IMR-90 (cell line): ENCODE measurements at regions of chr15 and their contacts with region 1.

Region 1: DNA sequence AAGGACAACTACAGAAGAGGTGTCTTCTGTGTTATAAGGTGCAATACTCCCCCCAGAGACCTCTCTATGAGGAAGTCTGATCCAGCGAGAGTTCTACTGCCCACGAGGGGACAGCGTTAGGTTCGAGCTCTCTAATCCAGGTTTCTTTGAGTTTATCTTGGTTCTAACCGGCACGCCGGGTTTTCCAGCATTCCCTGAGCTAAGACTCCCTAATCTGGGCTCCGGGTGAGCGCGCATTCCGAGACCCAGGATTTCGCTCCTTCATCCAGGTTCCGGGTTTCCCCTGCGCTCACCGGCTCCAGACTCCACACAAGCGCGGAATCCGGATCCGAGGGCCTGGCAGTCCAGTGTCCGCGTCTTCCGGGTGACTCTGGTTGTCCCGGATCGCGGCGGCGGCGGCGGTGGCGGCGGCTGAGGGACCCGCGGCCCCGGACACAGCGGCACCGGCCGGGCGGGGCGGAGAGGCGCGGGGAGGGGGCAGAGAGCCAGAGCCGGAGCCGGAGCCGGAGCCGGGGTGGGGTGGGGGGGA is at the start of gene ZNF609:
- DNase-seq: peak; percentile 94
- ATAC-seq: peak; percentile 86
- H3K4me3 ChIP-seq: peak within 1 kb of the TSS; percentile 70
- H3K27ac ChIP-seq: peak within 1 kb of the TSS; percentile 81
- H3K4me1 ChIP-seq: peaks cover 14% of the 10 kb centered on the region
- H3K27me3 ChIP-seq: no peaks in the 10 kb centered on the region
- CTCF ChIP-seq: no peak
- POLR2A ChIP-seq: peak; percentile 34; the same call in 1 of the 2 replicates
- RAD21 ChIP-seq: peak; percentile 40; the same call in 1 of the 2 replicates
- total RNA-seq, gene ZNF609: 10.4 and 12.2 TPM in 2 replicates

Region 2: GRCh38 chr15:64284042-64284441 is 176.2 kb before region 1 on chr15:
- CTCF ChIA-PET with region 1: no interaction called
- POLR2A ChIA-PET with region 1: no interaction called
- dilution Hi-C with region 1: no loop called
- in situ Hi-C with region 1: no loop called
- intact Hi-C with region 1: no loop called
- DNase-seq: peak; percentile 68
- ATAC-seq: peak; percentile 59
- H3K4me3 ChIP-seq: no peak overlapping the region
- H3K27ac ChIP-seq: no peak overlapping the region
- H3K4me1 ChIP-seq: peaks cover 6% of the 10 kb centered on the region
- H3K27me3 ChIP-seq: no peaks in the 10 kb centered on the region
- CTCF ChIP-seq: no peak
- POLR2A ChIP-seq: no peak
- RAD21 ChIP-seq: no peak

Region 3: DNA sequence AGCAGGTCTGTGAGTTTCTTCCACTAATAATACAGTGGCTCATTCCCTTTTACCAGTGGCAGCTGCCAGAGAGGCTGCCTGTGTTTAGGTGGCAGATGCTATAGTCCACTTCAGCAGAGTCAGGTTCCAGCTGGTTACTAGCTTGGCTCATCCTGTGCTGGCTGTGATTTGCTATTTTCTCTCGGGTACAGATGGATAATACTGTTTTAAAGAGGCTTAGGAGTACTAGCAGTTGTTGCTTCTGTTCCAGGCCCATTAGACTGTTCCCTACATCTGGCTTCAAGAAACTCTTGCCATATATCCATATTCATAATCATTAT is 41.1 kb after region 1 on chr15:
- CTCF ChIA-PET with region 1: no interaction called
- POLR2A ChIA-PET with region 1: interaction called, 18 read pairs
- dilution Hi-C with region 1: no loop called
- in situ Hi-C with region 1: no loop called
- intact Hi-C with region 1: loop called (anchors 5 kb)
- DNase-seq: no peak
- ATAC-seq: no peak
- H3K4me3 ChIP-seq: no peak overlapping the region
- H3K27ac ChIP-seq: no peak overlapping the region
- H3K4me1 ChIP-seq: peaks cover 15% of the 10 kb centered on the region
- H3K27me3 ChIP-seq: no peaks in the 10 kb centered on the region
- CTCF ChIP-seq: no peak
- POLR2A ChIP-seq: no peak
- RAD21 ChIP-seq: no peak

Region 4: DNA sequence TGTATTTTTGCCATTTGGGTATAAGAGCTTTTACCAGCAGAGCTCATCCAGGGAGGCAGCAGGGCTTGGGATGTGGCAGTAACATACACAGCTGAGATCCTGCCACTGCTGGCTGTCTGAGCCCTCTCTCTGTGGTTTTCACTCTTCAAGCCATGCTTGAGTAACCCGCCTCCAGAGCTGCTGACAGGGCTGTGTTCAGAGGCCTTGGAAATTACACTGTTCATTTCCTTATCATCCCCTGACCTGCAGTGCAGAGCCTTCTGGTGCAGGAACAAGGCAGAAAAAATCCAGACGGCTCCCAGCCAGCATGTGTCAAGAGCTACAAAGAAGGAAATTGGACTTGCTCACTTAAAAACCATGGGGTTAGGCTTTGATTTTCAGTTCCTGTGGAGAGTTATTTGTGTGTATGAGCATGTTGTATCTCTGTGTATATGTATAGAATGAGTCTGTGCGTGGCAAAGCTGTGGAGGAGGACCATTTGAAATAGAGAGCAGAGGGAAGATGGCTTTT is 47.1 kb after region 1 on chr15:
- CTCF ChIA-PET with region 1: no interaction called
- POLR2A ChIA-PET with region 1: no interaction called
- dilution Hi-C with region 1: no loop called
- in situ Hi-C with region 1: no loop called
- intact Hi-C with region 1: loop called (anchors 5 kb)
- DNase-seq: peak; percentile 92
- ATAC-seq: peak; percentile 89
- H3K4me3 ChIP-seq: no peak overlapping the region
- H3K27ac ChIP-seq: no peak overlapping the region
- H3K4me1 ChIP-seq: peaks cover 11% of the 10 kb centered on the region
- H3K27me3 ChIP-seq: no peaks in the 10 kb centered on the region
- CTCF ChIP-seq: no peak
- POLR2A ChIP-seq: no peak
- RAD21 ChIP-seq: no peak